ENCODE measurements at regions of chr2 and their contacts with region 1.

Region 1: GRCh38 chr2:68709421-68709911 is 25.1 kb upstream of the ARHGAP25 start:
- DNase-seq: peak; percentile 41
- H3K4me3 ChIP-seq: no peak overlapping the region
- H3K27ac ChIP-seq: no peak overlapping the region
- H3K27me3 ChIP-seq: peaks cover 6% of the 10 kb centered on the region
- CTCF ChIP-seq: peak; percentile 80

Region 2: DNA sequence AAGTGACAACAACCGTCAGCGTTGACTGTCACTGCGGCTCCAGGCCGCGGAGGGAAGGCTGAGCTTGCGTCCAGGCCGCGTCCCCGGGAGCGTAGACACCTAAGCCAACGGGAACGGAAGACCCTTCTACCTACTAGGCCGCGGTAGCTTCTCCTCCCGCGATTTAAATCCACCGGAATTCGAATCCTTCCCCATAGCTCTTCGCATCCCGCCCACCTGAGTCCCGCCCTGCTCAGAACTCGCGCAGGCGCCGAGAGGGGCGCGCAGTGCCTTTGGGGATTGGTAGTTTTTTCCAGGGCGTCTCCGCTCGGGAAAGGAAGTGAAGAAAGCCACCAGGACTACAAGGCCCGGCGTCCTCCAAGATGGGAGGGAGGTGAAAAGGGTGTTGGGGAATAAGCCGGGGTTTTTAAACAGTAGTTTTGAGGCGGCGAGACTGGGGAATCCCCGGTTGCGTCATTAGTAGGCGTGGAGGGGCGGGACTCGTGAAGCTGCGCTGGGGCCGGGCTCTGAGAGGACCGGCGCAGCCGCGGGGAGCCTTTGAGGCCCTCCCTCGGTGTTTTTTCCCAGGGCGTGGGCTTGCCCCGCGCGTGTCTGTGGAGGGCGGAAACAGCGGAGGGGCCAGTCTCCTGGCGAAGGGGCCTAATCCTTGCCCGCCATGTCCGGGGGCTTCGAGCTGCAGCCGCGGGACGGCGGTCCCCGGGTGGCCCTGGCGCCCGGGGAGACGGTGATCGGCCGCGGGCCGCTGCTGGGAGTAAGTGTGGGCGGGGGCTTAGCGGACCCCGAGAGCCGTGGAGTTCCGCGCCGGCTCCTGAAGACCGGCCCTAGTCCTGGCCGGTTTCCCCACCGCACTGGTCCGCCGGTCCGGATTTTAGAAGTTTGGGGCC is 242.1 kb before region 1 on chr2 and contains the starts of genes APLF and FBXO48:
- CTCF ChIA-PET with region 1: interaction called, 12 read pairs
- POLR2A ChIA-PET with region 1: no interaction called
- DNase-seq: peak; percentile 97
- H3K4me3 ChIP-seq: peak within 1 kb of the TSS; percentile 98
- H3K27ac ChIP-seq: peak within 1 kb of the TSS; percentile 77
- H3K27me3 ChIP-seq: no peaks in the 10 kb centered on the region
- CTCF ChIP-seq: no peak
- polyA plus RNA-seq, gene APLF: 2.5 and 3.6 TPM in 2 replicates
- polyA plus RNA-seq, gene FBXO48: 0.66 and 0.89 TPM in 2 replicates

Region 3: DNA sequence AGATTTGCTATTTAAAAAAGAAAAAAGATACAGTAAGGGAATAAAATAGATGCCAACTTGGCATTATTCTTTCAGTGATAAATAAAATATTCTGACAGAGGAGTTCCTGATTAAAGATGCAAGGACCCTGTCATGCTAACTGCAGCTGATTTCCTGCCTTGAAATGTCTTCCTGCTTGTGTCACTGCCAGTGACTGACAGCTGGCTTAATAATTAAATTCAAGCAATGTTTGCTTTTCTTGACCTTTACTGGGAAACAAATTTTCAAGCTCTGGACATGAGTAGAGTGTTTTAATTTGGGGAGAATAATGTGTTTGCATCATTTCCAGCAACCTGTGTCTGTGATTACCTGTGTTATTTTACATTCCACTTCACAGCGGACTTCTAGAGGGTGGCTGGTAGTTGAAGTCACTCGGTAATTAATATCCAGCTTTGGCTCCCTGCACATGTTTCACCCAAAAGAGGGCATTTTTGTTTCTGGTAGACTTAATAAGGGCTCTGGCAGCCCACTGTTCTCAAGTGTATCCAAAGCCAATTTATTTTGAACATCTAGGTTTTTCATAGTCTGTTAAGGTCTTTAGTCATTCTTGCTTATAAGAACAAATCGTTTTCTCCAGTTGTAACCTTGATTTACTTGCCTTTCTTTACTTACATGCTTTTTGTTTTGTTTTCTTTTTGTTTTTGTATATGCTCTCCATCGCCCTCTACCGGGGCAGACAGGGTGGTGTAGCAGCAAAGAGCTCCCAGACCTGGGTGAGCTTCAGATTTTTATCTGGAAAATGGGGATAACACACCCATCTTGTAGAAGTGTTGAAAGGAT is 114.6 kb before region 1 on chr2:
- CTCF ChIA-PET with region 1: interaction called, 10 read pairs
- POLR2A ChIA-PET with region 1: no interaction called
- DNase-seq: peak; percentile 3
- H3K4me3 ChIP-seq: no peak overlapping the region
- H3K27ac ChIP-seq: no peak overlapping the region
- H3K27me3 ChIP-seq: peaks cover 6% of the 10 kb centered on the region
- CTCF ChIP-seq: peak; percentile 92

Region 4: DNA sequence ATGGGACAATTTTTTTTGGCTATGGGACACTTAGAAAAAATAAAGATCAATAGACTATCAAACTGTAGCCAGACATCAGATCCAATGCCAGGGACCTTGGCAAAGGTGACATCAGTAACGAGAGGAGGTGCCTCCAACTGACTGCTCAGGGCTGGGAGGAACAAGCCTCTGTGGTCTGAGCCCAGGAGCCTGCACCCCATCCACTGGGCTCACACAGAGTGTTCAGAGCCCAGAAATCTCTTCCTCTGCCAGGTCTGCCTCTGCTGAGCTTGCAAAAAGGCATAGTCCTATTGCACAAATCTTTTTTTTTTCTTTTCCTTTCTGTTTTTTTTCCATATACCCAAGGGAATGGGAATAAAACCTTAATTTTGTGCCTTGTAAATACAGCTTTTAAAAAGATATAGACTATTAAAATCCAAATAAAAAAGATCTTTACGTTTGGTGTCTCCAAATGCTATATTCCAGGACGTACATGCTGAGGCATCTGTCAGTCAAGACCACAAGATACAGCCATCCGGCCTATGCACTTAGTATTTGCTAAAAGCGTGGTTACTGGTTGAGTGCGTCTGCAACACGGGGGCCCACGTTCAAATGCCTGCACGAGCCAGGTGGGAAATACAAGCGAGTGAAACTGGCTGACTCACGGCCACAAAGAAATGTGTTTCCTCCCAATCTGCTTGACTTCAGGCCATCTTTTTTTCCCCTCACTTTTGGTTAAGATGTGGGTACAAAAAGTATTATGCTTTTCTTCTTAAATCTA is 17.3 kb after region 1 on chr2:
- CTCF ChIA-PET with region 1: interaction called, 21 read pairs
- POLR2A ChIA-PET with region 1: no interaction called
- DNase-seq: no peak
- H3K4me3 ChIP-seq: no peak overlapping the region
- H3K27ac ChIP-seq: no peak overlapping the region
- H3K27me3 ChIP-seq: no peaks in the 10 kb centered on the region
- CTCF ChIP-seq: no peak

Region 5: GRCh38 chr2:68789603-68790002 is 80.1 kb after region 1 on chr2:
- CTCF ChIA-PET with region 1: no interaction called
- POLR2A ChIA-PET with region 1: no interaction called
- DNase-seq: no peak
- H3K4me3 ChIP-seq: no peak overlapping the region
- H3K27ac ChIP-seq: no peak overlapping the region
- H3K27me3 ChIP-seq: no peaks in the 10 kb centered on the region
- CTCF ChIP-seq: no peak

Region 6: DNA sequence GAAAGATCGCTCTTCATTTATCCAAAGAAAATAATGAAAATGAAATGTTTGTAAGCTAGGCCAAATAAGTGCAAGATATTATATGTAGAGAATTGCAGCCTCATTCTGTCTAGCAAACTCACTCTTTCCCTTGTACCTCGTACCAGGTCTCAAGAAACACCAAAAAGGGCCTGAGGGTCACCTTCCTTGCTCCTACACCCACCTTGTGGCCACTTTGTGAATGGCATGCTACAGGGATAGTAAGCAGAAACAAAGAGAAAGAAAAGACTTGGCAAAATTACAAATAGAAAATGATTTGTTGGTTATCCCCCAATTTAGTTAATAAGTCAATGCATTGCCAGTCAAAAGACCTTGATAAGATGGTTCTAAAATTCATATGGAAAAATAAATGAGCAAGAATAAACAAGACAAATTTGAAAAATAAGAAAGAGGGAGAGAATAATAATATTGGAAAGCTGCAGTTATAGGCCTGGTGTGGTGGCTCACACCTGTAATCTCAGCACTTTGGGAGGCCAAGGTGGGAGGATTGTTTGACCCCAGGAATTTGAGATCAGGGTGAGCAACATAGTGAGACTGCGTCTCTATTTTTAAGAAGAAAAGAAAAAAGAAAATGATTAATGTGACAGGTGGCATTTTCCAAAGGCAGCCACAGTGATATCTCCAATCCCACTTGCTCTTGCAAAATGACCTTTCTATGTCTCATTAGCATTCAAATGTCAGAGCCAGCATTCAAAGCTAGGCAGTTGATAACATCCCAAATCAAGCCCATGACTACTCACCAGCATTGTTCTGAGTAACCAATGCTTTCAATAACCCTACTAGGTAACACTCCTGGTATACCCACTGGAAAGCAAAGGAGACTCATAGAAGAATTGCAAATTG is 200.6 kb after region 1 on chr2:
- CTCF ChIA-PET with region 1: interaction called, 69 read pairs
- POLR2A ChIA-PET with region 1: no interaction called
- DNase-seq: peak; percentile 46
- H3K4me3 ChIP-seq: no peak overlapping the region
- H3K27ac ChIP-seq: no peak overlapping the region
- H3K27me3 ChIP-seq: no peaks in the 10 kb centered on the region
- CTCF ChIP-seq: peak; percentile 95

Region 7: GRCh38 chr2:68943581-68944568 is 234.4 kb after region 1 on chr2:
- CTCF ChIA-PET with region 1: interaction called, 11 read pairs
- POLR2A ChIA-PET with region 1: no interaction called
- DNase-seq: no peak
- H3K4me3 ChIP-seq: no peak overlapping the region
- H3K27ac ChIP-seq: no peak overlapping the region
- H3K27me3 ChIP-seq: no peaks in the 10 kb centered on the region
- CTCF ChIP-seq: peak; percentile 93

Measured in AG04450 (cell line).